ENCODE measurements at regions of chr10 and their contacts with region 1.

Region 1: DNA sequence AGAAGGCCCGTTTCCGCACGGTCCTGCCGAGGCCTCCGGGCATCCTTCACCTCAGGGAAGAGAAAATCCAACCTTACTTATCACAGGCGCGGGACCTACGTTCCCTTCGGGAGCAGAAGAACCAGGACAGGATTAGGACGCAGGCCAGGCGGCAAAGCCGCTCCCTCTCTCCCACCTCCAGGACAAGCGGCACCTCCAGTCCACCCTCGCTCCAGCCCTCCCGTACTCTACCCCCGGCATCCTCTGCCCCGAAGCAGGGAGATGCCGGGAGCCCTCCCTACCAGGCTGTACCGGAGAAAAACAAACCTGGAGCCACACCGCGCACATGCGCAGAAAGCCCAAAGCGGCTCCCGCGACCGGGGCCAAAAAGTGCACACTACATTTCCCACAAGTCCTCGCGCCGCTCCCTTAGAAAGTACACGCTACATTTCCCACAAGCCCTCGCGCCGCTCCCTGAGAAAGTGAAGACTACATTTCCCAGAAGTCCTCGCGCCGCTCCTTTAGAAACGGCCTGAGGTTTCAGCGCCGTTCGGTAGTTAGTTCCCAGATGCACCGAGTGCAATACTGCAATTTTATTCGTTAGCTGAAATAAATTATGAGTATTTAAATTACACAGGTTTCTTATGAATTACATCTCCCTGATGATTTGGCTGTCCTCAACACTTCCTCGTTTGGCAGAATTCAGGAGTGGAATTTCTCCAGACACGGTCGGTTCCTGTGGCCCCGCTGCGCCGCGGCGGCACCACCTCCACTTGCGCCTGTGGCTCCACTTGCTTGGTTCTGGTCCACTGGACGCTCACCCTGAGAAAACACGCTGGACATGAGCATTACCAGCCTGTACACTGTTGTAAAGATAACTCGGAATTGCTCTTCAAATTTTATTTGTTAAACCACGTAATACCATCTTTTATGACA is 85.6 kb downstream of the ZNF33B start:
- DNase-seq: peak; percentile 98
- H3K4me3 ChIP-seq: peak overlapping the region; percentile 67 to 71 (median 71)
- H3K27ac ChIP-seq: no peak overlapping the region
- H3K4me1 ChIP-seq: peaks cover 5% of the 10 kb centered on the region
- H3K27me3 ChIP-seq: no peaks in the 10 kb centered on the region
- CTCF ChIP-seq: no peak
- POLR2A ChIP-seq: peak; percentile 63

Region 2: DNA sequence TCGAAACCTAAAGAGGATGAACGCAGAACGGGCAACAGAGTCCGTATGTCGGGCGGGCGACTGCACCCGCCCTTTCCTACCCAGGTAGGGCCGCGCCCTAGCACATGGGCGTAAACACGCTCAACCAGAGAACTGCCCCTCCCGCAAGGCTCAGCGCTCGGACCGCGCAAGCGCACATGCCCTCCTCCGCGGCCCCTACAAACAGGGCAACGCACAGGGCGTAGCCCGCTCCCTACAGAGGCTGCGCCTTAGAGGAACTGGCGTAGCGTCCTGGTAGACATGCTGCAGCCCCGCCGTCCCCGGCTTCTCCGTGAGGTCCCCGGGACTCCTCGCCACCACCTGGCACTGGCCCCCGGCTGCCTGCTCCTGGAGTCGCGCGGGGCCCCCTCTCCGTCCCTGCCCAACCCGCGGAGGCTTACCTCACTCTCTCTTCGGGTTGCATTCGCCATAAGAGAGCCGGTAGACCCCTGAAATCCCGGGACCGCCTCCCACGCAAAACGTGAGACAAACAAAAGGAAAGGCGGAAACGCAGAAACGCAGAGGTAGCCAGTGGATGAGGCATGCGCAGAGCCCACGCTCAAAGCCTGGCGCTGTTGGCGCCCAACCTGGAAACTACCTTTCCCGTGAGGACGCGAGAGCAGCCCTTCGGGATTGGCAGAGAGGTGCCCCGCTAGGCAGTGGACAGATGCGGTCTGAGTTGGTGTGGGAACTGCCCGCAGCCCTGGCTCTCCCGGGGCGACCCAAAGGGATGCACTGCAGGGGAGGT is 85.5 kb after region 1 on chr10 and contains the start of gene ZNF33B:
- CTCF ChIA-PET with region 1: no interaction called
- POLR2A ChIA-PET with region 1: no interaction called
- dilution Hi-C with region 1: no loop called
- intact Hi-C with region 1: loop called (anchors 1 kb)
- DNase-seq: peak; percentile 95
- H3K4me3 ChIP-seq: peak within 1 kb of the TSS; percentile 42 to 82 (median 56)
- H3K27ac ChIP-seq: peak within 1 kb of the TSS; percentile 42
- H3K4me1 ChIP-seq: peaks cover 8% of the 10 kb centered on the region
- H3K27me3 ChIP-seq: peaks cover 0 to 2% of the 10 kb centered on the region in 2 experiments
- CTCF ChIP-seq: no peak
- POLR2A ChIP-seq: peak; percentile 79
- total RNA-seq, gene ZNF33B: 15.1 and 15.3 TPM in 2 replicates

Measured in endothelial cell of umbilical vein (primary cell).